ENCODE measurements at regions of chr20 and their contacts with region 1.

Region 1: DNA sequence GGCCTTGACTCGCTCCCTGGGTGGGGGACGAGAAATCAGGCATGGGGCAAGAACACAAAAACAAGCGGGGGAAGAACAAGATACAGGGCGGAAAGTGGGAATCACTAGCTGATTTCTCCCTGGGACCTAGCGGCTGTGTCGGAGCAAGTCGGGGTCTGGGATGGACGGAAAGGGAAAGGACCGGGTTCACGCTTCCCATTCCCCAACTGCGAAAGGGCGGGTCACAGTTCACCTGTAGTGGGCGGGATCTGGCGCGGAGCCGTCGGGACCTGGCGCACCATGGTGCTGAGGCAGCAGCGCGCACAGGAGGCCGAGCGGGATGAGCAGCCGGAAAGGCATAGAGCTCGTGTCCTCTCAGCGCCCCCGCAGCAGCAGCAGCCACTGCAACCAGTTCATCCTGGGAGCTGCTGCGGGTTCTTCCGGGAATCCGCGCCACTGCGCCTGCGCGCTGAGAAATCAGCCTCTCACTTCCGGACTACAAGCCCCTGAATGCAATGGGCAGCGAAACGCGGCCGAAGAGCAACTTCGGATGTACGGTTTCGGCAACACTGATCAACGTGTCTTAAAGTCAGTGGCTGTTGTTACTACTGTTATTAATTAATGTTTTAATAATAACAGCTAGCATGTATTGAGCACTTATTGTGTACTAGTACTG is at the start of gene EDEM2:
- DNase-seq: peak; percentile 98
- ATAC-seq: peak; percentile 96
- H3K4me3 ChIP-seq: peak within 1 kb of the TSS; percentile 78 to 92 (median 91)
- H3K27ac ChIP-seq: peak within 1 kb of the TSS; percentile 71
- H3K4me1 ChIP-seq: peaks cover 36% of the 10 kb centered on the region
- H3K27me3 ChIP-seq: no peaks in the 10 kb centered on the region; a peak in 1 of 5 replicates
- CTCF ChIP-seq: peak; percentile 81
- EP300 ChIP-seq: peak in 1 of 2 experiments; percentile 32; a peak in 1 of 4 replicates
- POLR2A ChIP-seq: peak; percentile 83 to 90; a peak in 3 of 4 replicates
- RAD21 ChIP-seq: peak; percentile 61; the same call in 1 of the 2 replicates
- total RNA-seq, gene EDEM2: 26.1 and 46.9 TPM in 2 replicates

Region 2: GRCh38 chr20:35092524-35093266 is 54.4 kb before region 1 on chr20 and contains the start of gene TRPC4AP:
- CTCF ChIA-PET with region 1: no interaction called
- POLR2A ChIA-PET with region 1: interaction called, 14 read pairs
- in situ Hi-C with region 1: no loop called
- intact Hi-C with region 1: loop called (anchors 1 kb)
- DNase-seq: peak; percentile 92
- ATAC-seq: peak; percentile 92
- H3K4me3 ChIP-seq: peak within 1 kb of the TSS; percentile 82 to 99 (median 82)
- H3K27ac ChIP-seq: peak within 1 kb of the TSS; percentile 82
- H3K4me1 ChIP-seq: peaks cover 61% of the 10 kb centered on the region
- H3K27me3 ChIP-seq: peaks cover 0 to 4% of the 10 kb centered on the region in 2 experiments; a peak in 1 of 5 replicates
- CTCF ChIP-seq: peak; percentile 99
- EP300 ChIP-seq: peak in 1 of 2 experiments; percentile 66; a peak in 3 of 4 replicates
- POLR2A ChIP-seq: peak; percentile 82 to 85
- RAD21 ChIP-seq: peak; percentile 77
- total RNA-seq, gene TRPC4AP: 136 and 161 TPM in 2 replicates

Region 3: DNA sequence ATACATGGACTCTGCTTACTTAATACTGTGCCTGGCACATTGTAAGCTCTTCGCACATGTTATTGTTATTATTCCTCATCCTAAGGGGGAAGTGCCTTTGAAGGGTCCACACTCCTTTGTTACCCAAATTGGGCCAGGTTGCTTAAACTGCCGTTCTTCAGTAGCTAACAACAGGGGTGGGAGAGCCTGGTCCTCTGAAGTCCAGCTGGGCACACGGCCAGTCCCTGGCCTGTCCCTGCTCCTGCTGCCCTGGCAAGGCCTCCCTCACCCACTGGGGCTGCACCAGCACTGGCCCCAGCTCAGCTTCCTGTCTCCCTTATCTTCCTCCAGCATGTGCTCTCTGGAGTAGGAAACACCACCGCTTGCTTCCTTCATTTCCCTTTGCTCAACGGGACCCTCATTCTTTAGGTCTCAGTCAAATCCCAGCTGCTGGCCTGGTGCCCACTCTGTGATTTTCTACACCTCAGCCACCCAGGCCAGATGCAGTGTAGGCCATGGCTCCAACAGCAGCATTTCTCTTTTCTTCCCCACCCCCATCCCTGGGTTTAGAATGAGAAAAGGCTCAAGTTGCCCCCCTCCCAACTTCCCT is 19.3 kb after region 1 on chr20:
- CTCF ChIA-PET with region 1: no interaction called
- POLR2A ChIA-PET with region 1: interaction called, 14 read pairs
- in situ Hi-C with region 1: no loop called
- intact Hi-C with region 1: no loop called
- DNase-seq: no peak
- ATAC-seq: peak; percentile 71
- H3K4me3 ChIP-seq: no peak overlapping the region
- H3K27ac ChIP-seq: no peak overlapping the region
- H3K4me1 ChIP-seq: peaks cover 27% of the 10 kb centered on the region
- H3K27me3 ChIP-seq: no peaks in the 10 kb centered on the region
- CTCF ChIP-seq: no peak
- EP300 ChIP-seq: no peak
- POLR2A ChIP-seq: no peak
- RAD21 ChIP-seq: no peak

Region 4: GRCh38 chr20:35174458-35175216 is 27.6 kb after region 1 on chr20:
- CTCF ChIA-PET with region 1: no interaction called
- POLR2A ChIA-PET with region 1: interaction called, 33 read pairs
- in situ Hi-C with region 1: no loop called
- intact Hi-C with region 1: loop called (anchors 2 kb)
- DNase-seq: peak; percentile 84
- ATAC-seq: peak; percentile 93
- H3K4me3 ChIP-seq: peak overlapping the region; percentile 3 to 56 (median 49); a peak in 5 of 6 replicates
- H3K27ac ChIP-seq: peak overlapping the region; percentile 72
- H3K4me1 ChIP-seq: peaks cover 44% of the 10 kb centered on the region
- H3K27me3 ChIP-seq: no peaks in the 10 kb centered on the region; a peak in 1 of 5 replicates
- CTCF ChIP-seq: peak; percentile 28; the same call in 1 of the 2 replicates
- EP300 ChIP-seq: peak; percentile 24 to 31; a peak in 2 of 4 replicates
- POLR2A ChIP-seq: peak; percentile 97 to 98
- RAD21 ChIP-seq: peak; percentile 44

Region 5: DNA sequence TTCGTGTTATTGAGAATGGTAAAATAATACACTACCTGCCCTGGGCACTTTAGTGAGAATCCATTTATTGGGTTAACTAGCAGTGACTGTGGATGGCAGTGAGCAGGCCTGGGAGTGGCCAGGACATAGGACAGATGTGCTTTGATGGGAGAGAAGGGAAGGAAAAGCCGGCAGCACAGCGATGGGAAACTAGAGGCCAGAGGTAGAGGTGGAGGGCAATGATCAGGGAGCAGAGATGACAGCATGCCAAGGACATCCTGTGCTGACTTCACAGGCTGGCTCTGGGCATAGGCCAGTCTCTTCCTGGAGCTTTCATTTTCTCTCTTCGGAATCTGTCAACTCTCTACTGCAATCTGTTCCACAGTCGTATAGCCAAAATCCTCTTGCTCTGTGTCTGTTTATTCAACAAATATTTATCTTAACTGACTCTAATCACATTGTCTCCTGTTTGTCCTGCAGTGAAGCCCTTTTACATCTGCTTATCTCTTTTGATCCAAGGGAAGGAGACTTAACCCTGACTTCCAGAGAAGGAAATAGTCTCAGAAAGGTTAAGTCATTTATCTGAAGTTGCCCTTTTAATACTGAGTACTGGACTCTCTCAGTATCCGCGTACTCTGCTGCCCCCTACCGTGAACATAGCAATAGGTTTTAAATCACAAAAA is 61.0 kb after region 1 on chr20:
- CTCF ChIA-PET with region 1: interaction called, 38 read pairs
- POLR2A ChIA-PET with region 1: interaction called, 7 read pairs
- in situ Hi-C with region 1: loop called (anchors 5 kb)
- intact Hi-C with region 1: loop called (anchors 1 kb)
- DNase-seq: peak; percentile 89
- ATAC-seq: peak; percentile 98
- H3K4me3 ChIP-seq: peak overlapping the region in 2 of 3 experiments; percentile 23 to 40; a peak in 4 of 6 replicates
- H3K27ac ChIP-seq: peak overlapping the region; percentile 46
- H3K4me1 ChIP-seq: peaks cover 18% of the 10 kb centered on the region
- H3K27me3 ChIP-seq: no peaks in the 10 kb centered on the region
- CTCF ChIP-seq: peak; percentile 97
- EP300 ChIP-seq: peak in 1 of 2 experiments; percentile 58; a peak in 1 of 4 replicates
- POLR2A ChIP-seq: no peak
- RAD21 ChIP-seq: peak; percentile 97

Region 6: GRCh38 chr20:35284267-35284991 is 137.4 kb after region 1 on chr20 and contains the start of gene EIF6:
- CTCF ChIA-PET with region 1: no interaction called
- POLR2A ChIA-PET with region 1: interaction called, 23 read pairs
- in situ Hi-C with region 1: no loop called
- intact Hi-C with region 1: no loop called
- DNase-seq: peak; percentile 99
- ATAC-seq: peak; percentile 76
- H3K4me3 ChIP-seq: peak within 1 kb of the TSS; percentile 80 to 98 (median 81)
- H3K27ac ChIP-seq: peak within 1 kb of the TSS; percentile 95
- H3K4me1 ChIP-seq: peaks cover 74% of the 10 kb centered on the region
- H3K27me3 ChIP-seq: peaks cover 0 to 2% of the 10 kb centered on the region in 2 experiments; a peak in 2 of 5 replicates
- CTCF ChIP-seq: peak; percentile 19; the same call in 1 of the 2 replicates
- EP300 ChIP-seq: peak; percentile 43 to 59; a peak in 3 of 4 replicates
- POLR2A ChIP-seq: peak; percentile 94 to 96
- RAD21 ChIP-seq: peak; percentile 44
- total RNA-seq, gene EIF6: 462 and 603 TPM in 2 replicates

Region 7: DNA sequence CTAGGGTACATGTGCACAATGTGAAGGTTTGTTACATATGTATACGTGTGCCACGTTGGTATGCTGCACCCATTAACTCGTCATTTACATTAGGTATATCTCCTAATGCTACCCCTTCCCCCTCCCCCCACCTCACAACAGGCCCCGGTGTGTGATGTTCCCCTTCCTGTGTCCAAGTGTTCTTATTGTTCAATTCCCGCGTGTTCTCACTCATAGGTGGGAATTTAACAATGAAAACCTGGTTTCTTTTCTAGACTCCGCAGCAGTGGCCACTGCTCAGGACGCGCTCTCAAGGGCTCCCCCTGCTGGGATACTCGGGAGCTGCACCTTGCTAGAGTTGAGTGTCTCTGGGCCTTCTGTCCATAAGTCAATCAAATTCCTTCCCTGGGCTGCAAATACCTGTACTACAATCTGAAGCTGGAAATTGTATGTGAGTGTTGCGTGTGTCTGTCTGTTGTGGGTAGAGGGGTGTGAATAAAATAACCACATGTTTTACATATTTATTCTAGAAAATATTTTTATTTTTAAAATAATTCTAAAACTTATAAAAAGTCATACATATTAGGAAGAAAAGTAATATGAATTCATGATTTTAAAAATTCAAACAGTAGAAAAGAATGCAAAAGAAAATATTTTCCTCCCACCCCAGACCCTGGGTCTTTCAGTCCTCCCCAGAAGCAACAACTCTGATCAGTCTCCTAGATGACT is 300.2 kb after region 1 on chr20:
- CTCF ChIA-PET with region 1: no interaction called
- POLR2A ChIA-PET with region 1: no interaction called
- in situ Hi-C with region 1: loop called (anchors 25 kb)
- intact Hi-C with region 1: no loop called
- DNase-seq: peak; percentile 92
- ATAC-seq: peak; percentile 90
- H3K4me3 ChIP-seq: peak overlapping the region; percentile 51 to 61 (median 55)
- H3K27ac ChIP-seq: no peak overlapping the region
- H3K4me1 ChIP-seq: peaks cover 8% of the 10 kb centered on the region
- H3K27me3 ChIP-seq: no peaks in the 10 kb centered on the region; a peak in 2 of 5 replicates
- CTCF ChIP-seq: peak; percentile 95
- EP300 ChIP-seq: no peak
- POLR2A ChIP-seq: peak in 1 of 2 experiments; percentile 48; a peak in 2 of 4 replicates
- RAD21 ChIP-seq: peak; percentile 75

Measured in HepG2 (cell line).